ENCODE measurements at regions of chr3 and their contacts with region 1.

Region 1: DNA sequence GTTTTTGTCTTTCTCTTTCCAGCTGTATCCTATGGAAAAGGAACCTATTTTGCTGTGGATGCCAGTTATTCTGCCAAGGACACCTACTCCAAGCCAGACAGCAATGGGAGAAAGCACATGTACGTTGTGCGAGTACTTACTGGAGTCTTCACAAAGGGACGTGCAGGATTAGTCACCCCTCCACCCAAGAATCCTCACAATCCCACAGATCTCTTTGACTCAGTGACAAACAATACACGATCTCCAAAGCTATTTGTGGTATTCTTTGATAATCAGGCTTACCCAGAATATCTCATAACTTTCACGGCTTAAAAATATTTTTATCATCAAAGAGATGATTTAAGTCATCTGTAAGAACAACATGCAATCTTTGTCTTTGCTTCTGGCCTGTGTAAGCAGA is 44.9 kb upstream of the PARP14 start:
- DNase-seq: peak; percentile 50
- H3K4me3 ChIP-seq: no peak overlapping the region
- H3K27ac ChIP-seq: peak overlapping the region; percentile 4
- H3K4me1 ChIP-seq: peaks cover 19% of the 10 kb centered on the region
- H3K27me3 ChIP-seq: no peaks in the 10 kb centered on the region
- CTCF ChIP-seq: no peak

Region 2: DNA sequence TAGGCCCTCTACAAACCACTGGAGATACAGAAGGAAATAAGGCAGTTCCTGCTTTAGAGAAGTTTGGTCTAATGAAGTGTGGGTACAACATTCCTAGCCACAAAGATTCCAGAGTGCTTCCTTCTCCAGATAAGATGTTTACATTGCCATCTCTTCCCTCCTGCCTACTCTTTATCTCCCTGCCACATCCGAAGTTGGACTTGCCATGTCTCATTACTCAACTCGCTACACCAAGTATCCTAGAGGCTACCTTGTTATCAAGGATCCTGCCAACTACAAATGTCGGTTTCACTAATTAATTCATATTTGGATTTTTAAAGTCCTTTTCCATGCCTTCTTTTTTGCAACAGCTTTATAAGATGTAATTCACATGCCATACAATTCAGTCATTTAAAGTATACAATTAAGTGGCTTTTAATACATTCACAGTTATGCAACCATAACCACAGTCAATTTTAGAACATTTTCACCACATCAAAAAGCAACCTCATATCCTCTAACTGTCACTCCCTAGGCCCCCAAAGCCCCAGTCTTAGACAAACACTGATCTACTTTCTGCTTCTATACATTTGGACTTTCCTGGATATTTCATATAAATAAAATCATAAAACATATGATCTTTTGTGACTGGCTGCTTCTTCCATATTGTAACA is 364.4 kb before region 1 on chr3:
- CTCF ChIA-PET with region 1: no interaction called
- dilution Hi-C with region 1: no loop called
- in situ Hi-C with region 1: no loop called
- intact Hi-C with region 1: no loop called
- DNase-seq: no peak
- H3K4me3 ChIP-seq: no peak overlapping the region
- H3K27ac ChIP-seq: no peak overlapping the region
- H3K4me1 ChIP-seq: no peaks in the 10 kb centered on the region
- H3K27me3 ChIP-seq: no peaks in the 10 kb centered on the region
- CTCF ChIP-seq: no peak

Region 3: GRCh38 chr3:122572940-122573412 is 62.8 kb before region 1 on chr3:
- CTCF ChIA-PET with region 1: no interaction called
- dilution Hi-C with region 1: loop called (anchors 5 kb)
- in situ Hi-C with region 1: no loop called
- intact Hi-C with region 1: no loop called
- DNase-seq: peak; percentile 77
- H3K4me3 ChIP-seq: no peak overlapping the region
- H3K27ac ChIP-seq: no peak overlapping the region
- H3K4me1 ChIP-seq: peaks cover 14% of the 10 kb centered on the region
- H3K27me3 ChIP-seq: no peaks in the 10 kb centered on the region
- CTCF ChIP-seq: no peak

Region 4: GRCh38 chr3:122810734-122811133 is 174.9 kb after region 1 on chr3:
- CTCF ChIA-PET with region 1: interaction called, 10 read pairs
- dilution Hi-C with region 1: no loop called
- in situ Hi-C with region 1: no loop called
- intact Hi-C with region 1: no loop called
- DNase-seq: no peak
- H3K4me3 ChIP-seq: no peak overlapping the region
- H3K27ac ChIP-seq: no peak overlapping the region
- H3K4me1 ChIP-seq: no peaks in the 10 kb centered on the region
- H3K27me3 ChIP-seq: no peaks in the 10 kb centered on the region
- CTCF ChIP-seq: no peak

Measured in mammary epithelial cell (primary cell).